ENCODE measurements at regions of chr9 and their contacts with region 1.

Region 1: DNA sequence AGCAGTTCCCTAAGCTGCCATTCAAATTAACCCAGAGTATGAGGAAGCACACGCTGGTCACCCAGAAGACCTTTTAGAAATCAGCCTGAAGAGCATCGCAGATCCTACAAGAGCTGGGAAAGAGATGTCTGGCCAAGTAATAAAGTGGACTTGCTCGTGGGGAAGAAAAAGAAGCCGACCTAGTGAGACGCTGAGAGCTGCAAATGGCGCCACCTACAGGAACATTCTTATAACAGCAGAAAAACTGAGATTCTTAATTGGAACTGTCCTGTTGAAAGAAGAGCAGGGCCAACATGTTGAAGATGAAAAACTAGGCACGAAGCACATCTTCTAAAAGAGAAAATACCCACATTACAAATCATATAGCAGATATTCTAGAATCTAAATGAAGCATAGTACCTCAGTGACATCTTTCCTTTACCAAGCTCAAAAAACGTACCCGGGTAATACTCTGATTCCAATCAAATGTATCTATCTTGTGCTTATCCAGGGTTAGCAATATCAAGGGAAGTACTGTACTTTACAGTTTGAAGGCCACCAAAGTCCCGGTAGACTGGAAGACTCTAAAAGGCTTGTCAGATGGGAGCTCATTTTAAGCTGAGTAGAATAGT is 3.9 kb upstream of the GNAQ start:
- DNase-seq: peak in 1 of 3 donors; percentile 29
- ATAC-seq: peak in 1 of 2 donors; percentile 23
- H3K4me3 ChIP-seq: no peak overlapping the region
- H3K27ac ChIP-seq: no peak overlapping the region
- H3K4me1 ChIP-seq: no peaks in the 10 kb centered on the region
- H3K27me3 ChIP-seq: no peaks in the 10 kb centered on the region

Region 2: GRCh38 chr9:77433675-77434445 is 601.6 kb before region 1 on chr9:
- intact Hi-C with region 1: loop called in 1 of 4 experiments (anchors 10 kb)
- DNase-seq: peak; percentile 66 to 86 (median 74)
- ATAC-seq: peak; percentile 71 to 81
- H3K4me3 ChIP-seq: no peak overlapping the region
- H3K27ac ChIP-seq: no peak overlapping the region
- H3K4me1 ChIP-seq: no peaks in the 10 kb centered on the region
- H3K27me3 ChIP-seq: no peaks in the 10 kb centered on the region

Region 3: GRCh38 chr9:77841739-77842386 is 193.6 kb before region 1 on chr9:
- intact Hi-C with region 1: loop called in 1 of 4 experiments (anchors 10 kb)
- DNase-seq: no peak
- ATAC-seq: no peak
- H3K4me3 ChIP-seq: no peak overlapping the region
- H3K27ac ChIP-seq: no peak overlapping the region
- H3K4me1 ChIP-seq: peaks cover 8% of the 10 kb centered on the region
- H3K27me3 ChIP-seq: no peaks in the 10 kb centered on the region

Region 4: DNA sequence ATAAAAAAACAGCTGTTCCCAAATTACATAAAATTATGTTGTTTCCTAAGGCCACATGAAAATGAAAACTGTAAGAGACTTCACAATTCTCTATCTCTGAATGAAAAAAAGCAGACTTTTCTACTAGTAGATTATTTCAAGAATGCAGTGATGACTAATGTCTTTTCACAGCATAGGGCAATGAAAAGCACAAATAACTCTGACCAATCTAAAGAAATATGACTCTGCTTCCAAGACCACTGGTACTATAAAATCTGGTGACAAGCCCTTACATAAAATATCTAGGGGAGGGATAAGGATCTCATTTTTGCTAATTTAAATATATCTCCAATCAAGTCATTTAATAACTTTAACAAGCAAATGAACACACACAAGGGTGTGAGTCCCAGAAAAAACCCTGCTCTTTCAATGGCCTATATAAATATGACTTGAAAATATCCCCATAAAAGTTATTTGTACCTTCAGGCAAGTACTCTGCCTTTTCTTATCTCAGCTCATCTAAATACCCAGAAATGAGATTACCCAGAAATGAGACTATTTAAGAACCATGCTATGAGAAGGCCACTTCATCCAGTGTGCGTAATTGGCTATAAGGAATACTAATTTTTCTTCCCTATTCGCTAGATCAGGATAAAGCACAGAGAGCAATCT is 109.1 kb before region 1 on chr9:
- intact Hi-C with region 1: no loop called
- DNase-seq: no peak
- ATAC-seq: no peak
- H3K4me3 ChIP-seq: no peak overlapping the region
- H3K27ac ChIP-seq: no peak overlapping the region
- H3K4me1 ChIP-seq: peaks cover 4% of the 10 kb centered on the region
- H3K27me3 ChIP-seq: no peaks in the 10 kb centered on the region

Region 5: DNA sequence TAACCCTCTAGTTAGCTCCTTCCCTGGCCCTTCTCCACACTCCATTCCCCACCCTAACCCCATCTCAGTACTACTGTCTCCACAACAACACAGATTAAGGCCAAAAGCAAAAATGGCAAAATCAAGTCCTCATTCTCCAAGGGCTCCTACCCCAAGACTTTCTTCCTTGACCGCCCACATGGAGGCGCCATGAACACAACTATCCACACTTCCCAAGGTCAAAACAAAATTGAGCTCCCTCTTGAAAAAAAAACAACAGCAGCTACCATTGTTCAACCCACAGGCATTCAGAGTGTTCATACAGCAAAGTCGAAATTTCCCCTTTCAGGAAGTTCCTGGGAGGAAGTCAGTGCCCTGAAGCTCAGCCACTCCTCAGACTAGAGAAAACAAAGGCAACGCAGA is 58.3 kb before region 1 on chr9:
- intact Hi-C with region 1: loop called in 2 of 4 experiments (anchors 5 kb)
- DNase-seq: peak; percentile 59 to 89 (median 83)
- ATAC-seq: peak; percentile 92 to 94
- H3K4me3 ChIP-seq: no peak overlapping the region
- H3K27ac ChIP-seq: peak overlapping the region; percentile 70
- H3K4me1 ChIP-seq: peaks cover 2% of the 10 kb centered on the region
- H3K27me3 ChIP-seq: no peaks in the 10 kb centered on the region

Measured in right cardiac atrium (tissue), 5 donors.